ENCODE measurements at regions of chr20 and their contacts with region 1.

Region 1: GRCh38 chr20:44080646-44081267 is 106.2 kb downstream of the JPH2 start:
- DNase-seq: peak; percentile 65 to 66
- H3K4me3 ChIP-seq: no peak overlapping the region
- H3K27ac ChIP-seq: no peak overlapping the region
- H3K4me1 ChIP-seq: no peaks in the 10 kb centered on the region
- H3K27me3 ChIP-seq: no peaks in the 10 kb centered on the region
- CTCF ChIP-seq: peak; percentile 93 to 98 (median 98)
- POLR2A ChIP-seq: no peak

Region 2: GRCh38 chr20:43749734-43750294 is 330.9 kb before region 1 on chr20:
- intact Hi-C with region 1: loop called (anchors 5 kb)
- DNase-seq: peak; percentile 38 to 57
- H3K4me3 ChIP-seq: no peak overlapping the region
- H3K27ac ChIP-seq: no peak overlapping the region
- H3K4me1 ChIP-seq: no peaks in the 10 kb centered on the region
- H3K27me3 ChIP-seq: no peaks in the 10 kb centered on the region
- CTCF ChIP-seq: peak; percentile 91 to 98 (median 92)
- POLR2A ChIP-seq: no peak

Measured in uterus (tissue), 4 donors.